ENCODE measurements at regions of chr1 and their contacts with region 1.

Region 1: GRCh38 chr1:92515796-92516201 is 29.1 kb upstream of the GFI1 start:
- DNase-seq: no peak
- ATAC-seq: no peak
- H3K4me3 ChIP-seq: no peak overlapping the region
- H3K4me3 Mint-ChIP-seq: no peak overlapping the region
- H3K27ac ChIP-seq: no peak overlapping the region
- H3K27ac Mint-ChIP-seq: no peak overlapping the region
- H3K4me1 ChIP-seq: no peaks in the 10 kb centered on the region
- H3K4me1 Mint-ChIP-seq: no peaks in the 10 kb centered on the region
- H3K27me3 ChIP-seq: no peaks in the 10 kb centered on the region
- H3K27me3 Mint-ChIP-seq: no peaks in the 10 kb centered on the region
- CTCF ChIP-seq: no peak

Region 2: DNA sequence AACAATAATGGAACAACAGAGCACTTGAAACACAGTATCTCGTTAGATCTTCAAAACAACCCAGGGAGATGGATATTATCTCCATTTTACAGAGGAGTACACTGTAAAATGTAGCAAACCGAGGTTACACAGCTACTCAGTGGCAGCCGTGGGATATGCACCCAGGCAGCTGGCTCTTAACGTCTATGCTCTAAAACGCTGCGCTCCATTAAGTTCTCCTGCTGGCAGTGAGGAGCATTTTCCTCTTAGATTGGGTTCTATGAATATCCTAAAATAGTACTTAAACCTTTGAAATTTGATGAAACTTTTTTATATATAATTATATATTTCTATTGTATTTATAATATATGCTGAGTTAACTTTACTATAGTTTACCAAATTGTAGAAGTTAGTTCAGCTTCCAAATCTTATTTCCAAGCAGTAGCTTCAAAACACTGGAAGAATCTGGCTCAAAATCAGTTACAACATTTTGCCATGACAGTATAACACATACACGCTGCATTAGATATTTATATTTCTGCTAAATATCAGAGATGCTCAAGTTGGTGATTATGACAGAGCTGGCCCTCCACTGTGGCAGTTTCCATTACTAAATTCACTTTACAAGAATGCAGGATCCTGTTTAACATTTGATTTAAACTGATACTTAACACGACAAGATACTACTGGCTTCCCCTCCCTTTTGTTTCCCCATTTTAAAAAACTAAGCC is 679.3 kb before region 1 on chr1:
- CTCF ChIA-PET with region 1: no interaction called
- POLR2A ChIA-PET with region 1: no interaction called
- intact Hi-C with region 1: no loop called
- DNase-seq: no peak
- ATAC-seq: no peak
- H3K4me3 ChIP-seq: no peak overlapping the region
- H3K4me3 Mint-ChIP-seq: no peak overlapping the region
- H3K27ac ChIP-seq: no peak overlapping the region
- H3K27ac Mint-ChIP-seq: no peak overlapping the region
- H3K4me1 ChIP-seq: peaks cover under 1% of the 10 kb centered on the region
- H3K4me1 Mint-ChIP-seq: peaks cover 4% of the 10 kb centered on the region
- H3K27me3 ChIP-seq: no peaks in the 10 kb centered on the region
- H3K27me3 Mint-ChIP-seq: no peaks in the 10 kb centered on the region
- CTCF ChIP-seq: no peak

Region 3: DNA sequence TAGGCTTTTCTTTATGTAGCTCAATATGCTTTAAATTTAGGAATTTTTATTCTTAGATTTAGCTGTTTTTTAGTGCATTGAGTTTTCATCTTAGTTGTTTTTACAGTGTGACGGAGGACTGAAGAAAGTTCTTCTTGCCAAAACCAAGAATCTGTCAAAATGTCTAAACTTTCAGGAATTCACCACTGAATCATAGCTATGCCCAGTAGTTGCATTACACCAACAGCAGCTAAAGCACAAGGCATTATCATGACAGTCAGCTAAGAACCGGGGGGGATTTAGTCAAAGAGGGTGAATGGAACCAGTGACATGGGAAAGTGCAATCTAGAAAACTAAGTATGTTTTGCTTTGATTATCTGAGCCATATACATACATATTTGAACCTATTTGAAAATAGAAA is 304.6 kb before region 1 on chr1:
- CTCF ChIA-PET with region 1: no interaction called
- POLR2A ChIA-PET with region 1: no interaction called
- intact Hi-C with region 1: no loop called
- DNase-seq: no peak
- ATAC-seq: no peak
- H3K4me3 ChIP-seq: no peak overlapping the region
- H3K4me3 Mint-ChIP-seq: no peak overlapping the region
- H3K27ac ChIP-seq: no peak overlapping the region
- H3K27ac Mint-ChIP-seq: no peak overlapping the region
- H3K4me1 ChIP-seq: no peaks in the 10 kb centered on the region
- H3K4me1 Mint-ChIP-seq: peaks cover 12% of the 10 kb centered on the region
- H3K27me3 ChIP-seq: no peaks in the 10 kb centered on the region
- H3K27me3 Mint-ChIP-seq: peaks cover 2% of the 10 kb centered on the region
- CTCF ChIP-seq: no peak

Region 4: GRCh38 chr1:92563457-92564216 is 47.8 kb after region 1 on chr1:
- CTCF ChIA-PET with region 1: no interaction called
- POLR2A ChIA-PET with region 1: no interaction called
- intact Hi-C with region 1: loop called in 1 of 2 experiments (anchors 5 kb)
- DNase-seq: no peak
- ATAC-seq: no peak
- H3K4me3 ChIP-seq: no peak overlapping the region
- H3K4me3 Mint-ChIP-seq: no peak overlapping the region
- H3K27ac ChIP-seq: no peak overlapping the region
- H3K27ac Mint-ChIP-seq: no peak overlapping the region
- H3K4me1 ChIP-seq: no peaks in the 10 kb centered on the region
- H3K4me1 Mint-ChIP-seq: peaks cover 2% of the 10 kb centered on the region
- H3K27me3 ChIP-seq: no peaks in the 10 kb centered on the region
- H3K27me3 Mint-ChIP-seq: no peaks in the 10 kb centered on the region
- CTCF ChIP-seq: no peak

Region 5: GRCh38 chr1:92872719-92873118 is 356.9 kb after region 1 on chr1:
- CTCF ChIA-PET with region 1: no interaction called
- POLR2A ChIA-PET with region 1: no interaction called
- intact Hi-C with region 1: no loop called
- DNase-seq: no peak
- ATAC-seq: no peak
- H3K4me3 ChIP-seq: no peak overlapping the region
- H3K4me3 Mint-ChIP-seq: no peak overlapping the region
- H3K27ac ChIP-seq: no peak overlapping the region
- H3K27ac Mint-ChIP-seq: no peak overlapping the region
- H3K4me1 ChIP-seq: peaks cover 17% of the 10 kb centered on the region
- H3K4me1 Mint-ChIP-seq: peaks cover 30% of the 10 kb centered on the region
- H3K27me3 ChIP-seq: no peaks in the 10 kb centered on the region
- H3K27me3 Mint-ChIP-seq: no peaks in the 10 kb centered on the region
- CTCF ChIP-seq: no peak